ENCODE measurements at regions of chr1 and their contacts with region 1.

Region 1: DNA sequence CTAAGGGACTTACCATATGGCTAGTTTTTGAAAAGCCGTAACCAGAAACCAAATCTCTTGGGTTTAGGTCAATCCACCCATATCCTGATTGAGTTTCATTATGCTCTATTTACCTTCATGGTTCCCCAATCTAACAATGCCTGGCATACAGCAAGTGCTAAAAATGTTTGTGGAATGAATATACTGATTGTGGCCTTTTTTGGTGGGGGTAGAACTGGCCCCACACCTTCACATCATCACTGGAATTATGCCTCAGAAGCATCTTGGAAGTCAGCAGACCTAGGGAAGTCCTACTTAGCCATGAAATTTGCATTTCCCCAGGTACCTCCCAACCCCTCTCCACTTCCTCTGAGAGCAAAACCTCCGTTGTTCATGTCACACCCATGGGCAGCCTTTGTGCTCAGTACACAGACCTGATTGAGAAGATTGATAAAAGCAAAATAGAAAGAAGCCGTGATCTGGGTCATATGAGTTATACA is 17.8 kb upstream of the SLAMF1 start:
- DNase-seq: peak; percentile 66
- H3K4me3 Mint-ChIP-seq: peak overlapping the region; percentile 62
- H3K27ac Mint-ChIP-seq: peak overlapping the region; percentile 91
- H3K4me1 Mint-ChIP-seq: peaks cover 77% of the 10 kb centered on the region
- H3K27me3 Mint-ChIP-seq: no peaks in the 10 kb centered on the region

Region 2: GRCh38 chr1:160539990-160540858 is 124.4 kb before region 1 on chr1:
- CTCF ChIA-PET with region 1: no interaction called
- POLR2A ChIA-PET with region 1: no interaction called
- DNase-seq: peak; percentile 69
- H3K4me3 Mint-ChIP-seq: peak overlapping the region; percentile 42
- H3K27ac Mint-ChIP-seq: peak overlapping the region; percentile 92
- H3K4me1 Mint-ChIP-seq: peaks cover 52% of the 10 kb centered on the region
- H3K27me3 Mint-ChIP-seq: no peaks in the 10 kb centered on the region

Region 3: GRCh38 chr1:160629286-160630210 is 35.1 kb before region 1 on chr1:
- CTCF ChIA-PET with region 1: interaction called, 3 read pairs
- POLR2A ChIA-PET with region 1: interaction called, 23 read pairs
- DNase-seq: peak; percentile 81
- H3K4me3 Mint-ChIP-seq: peak overlapping the region; percentile 62
- H3K27ac Mint-ChIP-seq: peak overlapping the region; percentile 99
- H3K4me1 Mint-ChIP-seq: peaks cover 96% of the 10 kb centered on the region
- H3K27me3 Mint-ChIP-seq: no peaks in the 10 kb centered on the region

Region 4: GRCh38 chr1:160637821-160638539 is 26.6 kb before region 1 on chr1:
- CTCF ChIA-PET with region 1: interaction called, 6 read pairs
- POLR2A ChIA-PET with region 1: interaction called, 105 read pairs
- DNase-seq: peak; percentile 73
- H3K4me3 Mint-ChIP-seq: peak overlapping the region; percentile 70
- H3K27ac Mint-ChIP-seq: peak overlapping the region; percentile 95
- H3K4me1 Mint-ChIP-seq: peaks cover 95% of the 10 kb centered on the region
- H3K27me3 Mint-ChIP-seq: no peaks in the 10 kb centered on the region

Region 5: DNA sequence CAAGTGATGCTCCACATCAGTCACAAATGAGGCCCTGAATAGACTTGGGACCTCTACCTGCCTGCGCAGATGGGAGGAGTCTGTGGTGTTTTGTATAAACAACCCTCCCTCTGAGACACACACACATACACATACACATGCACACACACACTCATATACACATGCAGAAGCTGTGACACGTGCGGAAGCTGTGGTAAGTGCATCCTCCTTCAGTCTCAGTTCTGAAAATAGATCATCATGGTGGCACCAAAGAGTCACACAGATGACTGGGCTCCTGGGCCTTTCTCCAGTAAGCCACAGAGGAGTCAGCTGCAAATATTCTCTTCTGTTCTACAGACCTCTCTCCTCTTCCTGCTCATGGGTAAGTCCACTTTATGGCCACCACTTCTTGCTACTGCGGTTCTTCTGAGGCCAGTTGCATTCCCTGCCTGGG is 131.4 kb after region 1 on chr1 and contains the start of gene LY9:
- CTCF ChIA-PET with region 1: no interaction called
- POLR2A ChIA-PET with region 1: no interaction called
- DNase-seq: peak; percentile 88
- H3K4me3 Mint-ChIP-seq: peak within 1 kb of the TSS; percentile 91
- H3K27ac Mint-ChIP-seq: peak within 1 kb of the TSS; percentile 96
- H3K4me1 Mint-ChIP-seq: peaks cover 66% of the 10 kb centered on the region
- H3K27me3 Mint-ChIP-seq: peaks cover 3% of the 10 kb centered on the region
- total RNA-seq, gene LY9: 46.4 to 49.9 TPM

Measured in activated CD4-positive, alpha-beta memory T cell treated with anti-CD3 and anti-CD28 coated beads, Interleukin-2, amount 10 ng/mL, durations not matched to agents 7 days and 5 days (primary cell).